ENCODE measurements at regions of chr12 and their contacts with region 1.

Region 1: GRCh38 chr12:546921-547845 is 87.4 kb downstream of the B4GALNT3 start:
- DNase-seq: peak; percentile 75
- H3K4me3 ChIP-seq: no peak overlapping the region
- H3K27ac ChIP-seq: no peak overlapping the region
- H3K4me1 ChIP-seq: peaks cover 2% of the 10 kb centered on the region
- CTCF ChIP-seq: peak; percentile 97

Region 2: GRCh38 chr12:337039-337438 is 210.1 kb before region 1 on chr12:
- CTCF ChIA-PET with region 1: no interaction called
- POLR2A ChIA-PET with region 1: no interaction called
- intact Hi-C with region 1: no loop called
- DNase-seq: no peak
- H3K4me3 ChIP-seq: no peak overlapping the region
- H3K27ac ChIP-seq: no peak overlapping the region
- H3K4me1 ChIP-seq: no peaks in the 10 kb centered on the region
- CTCF ChIP-seq: no peak

Region 3: DNA sequence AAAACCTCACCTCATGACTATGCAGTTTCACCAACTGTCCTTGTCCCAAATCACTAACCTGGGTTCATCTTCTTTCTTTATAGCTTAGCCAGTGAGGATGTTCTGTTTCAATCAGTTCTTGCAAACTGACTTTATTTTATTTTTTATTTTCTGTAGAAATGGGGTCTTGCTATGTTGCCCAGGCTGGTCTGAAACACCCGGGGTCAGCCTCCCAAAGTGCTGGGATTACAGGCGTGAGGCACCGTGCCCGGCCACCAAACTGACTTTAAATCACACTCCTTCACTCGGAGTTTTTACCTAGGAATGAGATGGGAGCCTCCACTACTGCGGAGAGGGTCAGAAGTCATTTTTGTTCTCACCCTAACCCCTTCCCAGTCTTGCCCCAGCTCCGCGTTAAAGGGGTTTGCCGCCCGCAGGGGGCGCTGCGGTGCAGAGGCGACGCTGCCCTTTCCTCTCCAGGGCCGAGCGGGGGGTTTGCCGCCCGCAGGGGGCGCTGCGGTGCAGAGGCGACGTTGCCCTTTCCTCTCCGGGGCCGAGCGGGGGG is 94.4 kb before region 1 on chr12:
- CTCF ChIA-PET with region 1: interaction called, 3 read pairs
- POLR2A ChIA-PET with region 1: interaction called, 4 read pairs
- intact Hi-C with region 1: loop called (anchors 1 kb)
- DNase-seq: peak; percentile 51
- H3K4me3 ChIP-seq: no peak overlapping the region
- H3K27ac ChIP-seq: no peak overlapping the region
- H3K4me1 ChIP-seq: no peaks in the 10 kb centered on the region
- CTCF ChIP-seq: no peak

Region 4: DNA sequence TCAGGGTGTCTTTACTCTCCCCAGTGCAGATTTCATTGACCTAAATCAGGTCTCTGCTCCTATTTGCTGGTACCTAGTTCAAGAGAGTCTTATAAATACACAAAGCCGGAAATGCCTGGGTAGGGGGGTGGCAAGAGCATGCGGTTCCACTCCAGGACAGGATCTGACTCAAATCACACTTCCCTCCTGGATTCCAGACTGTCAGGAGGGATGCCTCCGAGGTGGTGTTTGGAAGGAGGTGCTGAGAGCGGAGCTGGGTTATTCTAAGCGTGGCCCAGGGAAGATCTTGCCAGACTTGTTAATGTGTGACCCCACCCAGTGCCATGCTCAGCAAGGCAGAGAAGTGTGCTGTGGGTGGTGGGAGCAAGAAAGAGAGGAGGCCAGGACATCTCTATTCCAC is 37.7 kb before region 1 on chr12:
- CTCF ChIA-PET with region 1: no interaction called
- POLR2A ChIA-PET with region 1: no interaction called
- intact Hi-C with region 1: loop called (anchors 2 kb)
- DNase-seq: peak; percentile 52
- H3K4me3 ChIP-seq: peak overlapping the region; percentile 11
- H3K27ac ChIP-seq: peak overlapping the region; percentile 68
- H3K4me1 ChIP-seq: peaks cover 47% of the 10 kb centered on the region
- CTCF ChIP-seq: no peak

Region 5: DNA sequence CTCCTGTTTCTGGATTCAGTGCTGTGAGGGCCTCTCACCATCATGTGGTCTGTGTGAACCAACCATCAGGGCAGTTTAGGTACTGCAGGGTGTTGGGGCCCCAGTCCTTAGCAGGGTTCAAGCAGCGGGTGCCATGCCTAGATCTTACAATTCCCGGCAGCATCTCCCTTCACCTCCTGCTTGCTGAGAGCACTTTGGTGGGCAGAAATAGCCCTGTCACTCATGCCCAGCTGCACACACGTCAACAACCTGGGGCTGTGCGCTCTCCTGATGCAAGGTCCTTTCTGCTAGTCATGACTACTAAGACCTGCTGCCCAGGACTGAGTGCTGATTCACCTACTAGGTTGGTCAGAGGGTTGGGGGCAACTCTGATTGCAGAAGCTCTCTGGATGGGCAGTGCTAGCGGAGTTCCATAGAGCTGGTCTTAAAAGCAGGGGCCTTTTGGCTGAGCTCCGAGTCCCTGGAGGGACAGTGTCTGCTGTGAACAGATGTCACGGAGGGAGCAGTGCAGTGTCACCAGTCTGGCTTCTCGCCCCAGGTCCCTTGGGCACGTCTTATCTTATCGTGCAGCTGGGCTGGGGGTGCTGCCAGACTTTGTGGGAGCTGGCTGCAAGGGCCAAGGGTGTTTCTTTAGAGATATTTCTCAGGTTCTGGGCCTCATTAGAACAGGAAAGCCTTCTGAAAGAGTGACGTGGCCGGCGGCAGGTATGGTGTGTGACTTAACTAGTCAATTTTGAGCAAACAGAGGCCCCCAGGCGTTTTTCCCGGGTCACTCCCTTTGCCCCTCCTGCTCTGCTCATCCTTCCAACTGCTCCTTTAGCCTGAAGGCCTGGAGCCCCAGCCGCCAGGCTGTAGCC is 44.2 kb after region 1 on chr12:
- CTCF ChIA-PET with region 1: no interaction called
- POLR2A ChIA-PET with region 1: no interaction called
- intact Hi-C with region 1: no loop called
- DNase-seq: no peak
- H3K4me3 ChIP-seq: no peak overlapping the region
- H3K27ac ChIP-seq: no peak overlapping the region
- H3K4me1 ChIP-seq: no peaks in the 10 kb centered on the region
- CTCF ChIP-seq: no peak